ENCODE measurements at regions of chr21 and their contacts with region 1.

Region 1: DNA sequence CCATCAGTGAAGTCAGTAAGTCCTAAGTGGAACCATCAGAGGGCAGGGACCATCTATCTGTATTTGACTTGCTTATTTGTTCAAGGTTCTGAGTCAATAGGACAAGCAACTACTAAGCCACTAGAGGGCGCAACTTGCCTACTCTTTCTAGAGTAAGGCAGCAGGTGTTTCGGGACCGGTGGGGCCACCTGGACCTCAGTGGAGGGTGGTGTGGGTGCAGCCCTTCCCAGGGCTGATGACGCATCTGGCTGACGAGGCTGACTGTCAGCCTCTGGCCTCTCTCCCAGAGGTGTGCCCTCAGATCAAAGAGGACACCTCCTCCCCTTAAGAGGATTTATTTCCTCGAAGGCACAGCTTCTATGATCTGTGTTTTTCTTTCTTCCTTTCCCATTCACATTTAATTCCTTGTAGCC is 6.6 kb downstream of the CBR3 start:
- DNase-seq: peak; percentile 76 to 78
- H3K4me3 ChIP-seq: no peak overlapping the region
- H3K27ac ChIP-seq: no peak overlapping the region
- H3K4me1 ChIP-seq: peaks cover 0 to 19% (median 13%) of the 10 kb centered on the region in 4 donors
- H3K27me3 ChIP-seq: no peaks in the 10 kb centered on the region
- CTCF ChIP-seq: peak; percentile 69 to 72

Region 2: GRCh38 chr21:36060159-36060921 is 81.2 kb before region 1 on chr21 and contains the start of gene SETD4:
- intact Hi-C with region 1: no loop called
- DNase-seq: peak; percentile 89 to 95
- H3K4me3 ChIP-seq: peak within 1 kb of the TSS; percentile 74 to 83
- H3K27ac ChIP-seq: peak within 1 kb of the TSS; percentile 94
- H3K4me1 ChIP-seq: peaks cover 0 to 16% (median 10%) of the 10 kb centered on the region in 4 donors
- H3K27me3 ChIP-seq: no peaks in the 10 kb centered on the region
- CTCF ChIP-seq: no peak

Region 3: GRCh38 chr21:36209626-36210171 is 68.2 kb after region 1 on chr21:
- intact Hi-C with region 1: loop called (anchors 5 kb)
- DNase-seq: no peak
- H3K4me3 ChIP-seq: no peak overlapping the region
- H3K27ac ChIP-seq: no peak overlapping the region
- H3K4me1 ChIP-seq: no peaks in the 10 kb centered on the region
- H3K27me3 ChIP-seq: no peaks in the 10 kb centered on the region
- CTCF ChIP-seq: peak; percentile 16 to 37

Region 4: GRCh38 chr21:36330904-36331303 is 189.4 kb after region 1 on chr21:
- intact Hi-C with region 1: loop called (anchors 5 kb)
- DNase-seq: peak in 1 of 2 donors; percentile 33
- H3K4me3 ChIP-seq: no peak overlapping the region
- H3K27ac ChIP-seq: no peak overlapping the region
- H3K4me1 ChIP-seq: peaks cover 0 to 57% (median 24%) of the 10 kb centered on the region in 4 donors
- H3K27me3 ChIP-seq: no peaks in the 10 kb centered on the region
- CTCF ChIP-seq: peak; percentile 64 to 67